CD8-positive, alpha-beta T cell (primary cell): ENCODE measurements at regions of chr19 and their contacts with region 1.

Region 1: GRCh38 chr19:2840794-2841790 is at the start of gene ZNF555:
- DNase-seq: peak; percentile 97 to 100 (median 98)
- ATAC-seq: peak; percentile 92
- H3K4me3 ChIP-seq: peak within 1 kb of the TSS; percentile 68 to 82
- H3K4me3 Mint-ChIP-seq: peak within 1 kb of the TSS; percentile 95
- H3K27ac ChIP-seq: peak within 1 kb of the TSS; percentile 67 to 85
- H3K27ac Mint-ChIP-seq: peak within 1 kb of the TSS; percentile 90
- H3K4me1 ChIP-seq: peaks cover 13% of the 10 kb centered on the region
- H3K4me1 Mint-ChIP-seq: peaks cover 23% of the 10 kb centered on the region
- H3K27me3 ChIP-seq: no peaks in the 10 kb centered on the region
- H3K27me3 Mint-ChIP-seq: no peaks in the 10 kb centered on the region
- CTCF ChIP-seq: peak; percentile 39
- total RNA-seq, gene ZNF555: 2.6 to 2.8 TPM

Region 2: DNA sequence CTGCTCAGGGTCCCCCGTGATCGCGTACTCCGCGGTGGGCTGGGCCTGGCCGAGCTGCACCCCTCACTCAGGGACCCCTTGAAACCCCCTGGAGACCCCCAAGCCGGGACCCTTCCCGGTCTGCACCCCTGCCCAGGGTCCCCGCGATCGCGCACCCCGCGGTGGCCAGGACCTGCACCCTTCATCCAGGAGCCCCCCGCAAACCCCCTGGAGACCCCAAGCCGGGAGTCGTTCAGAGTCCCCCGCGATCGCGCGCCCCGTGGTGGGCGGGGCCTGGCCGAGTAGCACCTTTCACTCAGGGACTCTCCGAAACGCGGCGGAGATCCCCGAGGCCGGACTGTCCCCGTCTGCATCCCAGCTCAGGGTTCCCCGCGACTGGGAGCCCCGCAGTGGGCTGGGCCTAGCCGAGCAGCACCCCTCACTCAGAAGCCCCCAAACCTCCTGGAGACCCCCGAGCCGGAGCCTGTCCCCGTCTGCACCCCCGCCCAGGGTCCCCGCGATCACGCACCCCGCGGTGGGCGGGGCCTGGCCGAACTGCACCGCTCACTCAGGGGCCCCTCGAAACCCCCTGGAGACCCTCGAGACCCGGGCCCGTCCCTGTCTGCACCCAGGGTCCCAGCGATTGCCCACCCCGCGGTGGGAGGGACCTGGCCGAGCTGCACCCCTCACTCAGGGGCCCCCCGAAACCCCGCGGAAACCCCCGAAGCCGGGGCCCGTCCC is 385.1 kb before region 1 on chr19:
- CTCF ChIA-PET with region 1: no interaction called
- POLR2A ChIA-PET with region 1: no interaction called
- intact Hi-C with region 1: loop called in 1 of 2 experiments (anchors 1 kb)
- DNase-seq: peak in 7 of 9 experiments; percentile 22 to 87 (median 52)
- ATAC-seq: peak; percentile 41
- H3K4me3 ChIP-seq: peak overlapping the region; percentile 62 to 80
- H3K4me3 Mint-ChIP-seq: peak overlapping the region; percentile 83
- H3K27ac ChIP-seq: peak overlapping the region; percentile 32 to 50
- H3K27ac Mint-ChIP-seq: peak overlapping the region; percentile 75
- H3K4me1 ChIP-seq: peaks cover 14% of the 10 kb centered on the region
- H3K4me1 Mint-ChIP-seq: peaks cover 13% of the 10 kb centered on the region
- H3K27me3 ChIP-seq: no peaks in the 10 kb centered on the region
- H3K27me3 Mint-ChIP-seq: no peaks in the 10 kb centered on the region
- CTCF ChIP-seq: no peak

Region 3: GRCh38 chr19:2820112-2820702 is 20.9 kb before region 1 on chr19:
- CTCF ChIA-PET with region 1: interaction called, 8 read pairs
- POLR2A ChIA-PET with region 1: interaction called, 8 read pairs
- intact Hi-C with region 1: loop called (anchors 1 kb)
- DNase-seq: peak in 1 of 9 experiments; percentile 16
- ATAC-seq: peak; percentile 9
- H3K4me3 ChIP-seq: peak overlapping the region; percentile 50 to 72
- H3K4me3 Mint-ChIP-seq: peak overlapping the region; percentile 86
- H3K27ac ChIP-seq: peak overlapping the region in 1 of 2 experiments; percentile 33
- H3K27ac Mint-ChIP-seq: peak overlapping the region; percentile 22
- H3K4me1 ChIP-seq: peaks cover 8% of the 10 kb centered on the region
- H3K4me1 Mint-ChIP-seq: peaks cover 10% of the 10 kb centered on the region
- H3K27me3 ChIP-seq: no peaks in the 10 kb centered on the region
- H3K27me3 Mint-ChIP-seq: no peaks in the 10 kb centered on the region
- CTCF ChIP-seq: no peak

Region 4: DNA sequence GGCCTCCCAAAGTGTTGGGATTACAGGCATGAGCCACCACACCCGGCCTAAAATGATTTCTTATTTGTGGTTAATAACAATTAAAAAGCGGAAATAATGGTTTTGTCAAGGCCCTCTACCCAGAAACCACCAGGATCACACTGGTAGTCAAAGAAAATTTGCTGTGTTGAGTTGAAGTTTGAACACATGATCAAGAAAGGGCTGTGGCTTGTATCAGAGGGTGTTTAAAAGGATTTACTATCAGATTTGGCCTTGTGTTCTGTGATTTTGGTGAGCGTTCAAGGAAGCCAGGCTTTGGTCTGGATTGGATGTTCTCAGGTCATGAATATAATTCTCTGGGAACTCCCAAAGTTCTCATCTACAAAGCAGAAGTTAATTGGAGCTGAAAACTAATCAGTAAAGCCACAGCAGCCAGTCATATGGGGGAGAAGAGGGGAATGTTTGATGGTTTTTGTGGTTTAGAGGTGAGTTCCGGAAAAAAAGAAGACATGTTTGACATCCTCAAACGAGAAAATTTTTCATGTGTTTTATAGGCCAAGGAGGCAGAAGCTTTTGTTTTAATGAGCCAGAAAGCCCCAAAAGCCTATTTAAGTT is 15.5 kb after region 1 on chr19:
- CTCF ChIA-PET with region 1: interaction called, 8 read pairs
- POLR2A ChIA-PET with region 1: interaction called, 4 read pairs
- intact Hi-C with region 1: loop called (anchors 1 kb)
- DNase-seq: peak in 2 of 9 experiments; percentile 64 to 78
- ATAC-seq: peak; percentile 80
- H3K4me3 ChIP-seq: no peak overlapping the region
- H3K4me3 Mint-ChIP-seq: peak overlapping the region; percentile 42
- H3K27ac ChIP-seq: peak overlapping the region in 1 of 2 experiments; percentile 17
- H3K27ac Mint-ChIP-seq: peak overlapping the region; percentile 78
- H3K4me1 ChIP-seq: peaks cover 34% of the 10 kb centered on the region
- H3K4me1 Mint-ChIP-seq: peaks cover 27% of the 10 kb centered on the region
- H3K27me3 ChIP-seq: no peaks in the 10 kb centered on the region
- H3K27me3 Mint-ChIP-seq: no peaks in the 10 kb centered on the region
- CTCF ChIP-seq: no peak

Region 5: DNA sequence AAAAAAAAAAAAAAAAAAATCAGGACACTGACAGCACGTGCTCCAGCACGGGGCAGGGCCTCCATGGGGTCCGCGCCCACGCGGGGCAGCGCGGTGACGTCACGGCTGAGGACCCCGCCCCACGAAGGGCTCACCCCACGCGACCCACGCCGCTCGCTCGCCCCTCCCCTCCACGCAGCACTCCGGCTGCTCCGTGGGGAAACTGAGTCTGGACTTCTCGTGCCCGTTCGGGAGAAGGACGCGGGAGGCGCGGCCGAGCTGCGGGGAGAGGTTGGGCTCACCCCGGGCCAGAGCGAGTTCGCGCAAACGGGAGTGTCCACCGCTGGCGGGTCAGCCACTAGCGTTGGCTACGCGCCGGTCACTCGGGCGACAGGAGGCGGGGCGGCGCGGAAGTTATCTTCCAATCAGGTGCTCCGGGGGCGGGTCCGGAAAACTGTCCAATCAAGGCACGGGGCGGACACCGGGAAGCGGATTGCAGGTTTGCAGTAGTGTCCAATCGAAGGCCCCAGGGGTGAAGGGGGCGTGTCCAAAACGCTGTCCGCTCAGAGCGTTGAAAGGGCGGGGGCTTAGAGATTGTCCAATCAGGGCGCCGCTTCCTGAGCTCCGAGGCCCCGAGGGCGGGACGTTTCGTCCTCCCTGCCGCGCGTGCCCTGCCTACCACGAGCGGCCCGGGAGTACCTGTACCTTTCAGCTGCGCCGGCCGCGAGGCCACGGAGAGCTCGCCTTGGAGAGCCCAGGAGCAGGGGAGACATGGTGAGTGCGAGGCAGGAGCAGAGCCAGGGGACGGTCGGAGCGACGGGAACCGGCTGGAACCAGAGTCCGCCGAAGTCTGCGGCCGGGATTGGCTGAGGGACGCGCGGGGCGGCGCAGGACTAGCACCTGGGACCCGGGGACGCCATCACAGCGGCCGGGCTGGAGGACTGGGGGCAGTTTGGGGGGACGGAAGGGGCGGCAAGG is 59.5 kb after region 1 on chr19 and contains the start of gene ZNF57:
- CTCF ChIA-PET with region 1: no interaction called
- POLR2A ChIA-PET with region 1: no interaction called
- intact Hi-C with region 1: loop called (anchors 1 kb)
- DNase-seq: peak; percentile 92 to 99 (median 98)
- ATAC-seq: peak; percentile 96
- H3K4me3 ChIP-seq: peak within 1 kb of the TSS; percentile 85 to 90
- H3K4me3 Mint-ChIP-seq: peak within 1 kb of the TSS; percentile 97
- H3K27ac ChIP-seq: peak within 1 kb of the TSS; percentile 37 to 50
- H3K27ac Mint-ChIP-seq: peak within 1 kb of the TSS; percentile 86
- H3K4me1 ChIP-seq: peaks cover 10% of the 10 kb centered on the region
- H3K4me1 Mint-ChIP-seq: peaks cover 27% of the 10 kb centered on the region
- H3K27me3 ChIP-seq: no peaks in the 10 kb centered on the region
- H3K27me3 Mint-ChIP-seq: no peaks in the 10 kb centered on the region
- CTCF ChIP-seq: no peak
- total RNA-seq, gene ZNF57: 0.72 to 1.5 TPM

Region 6: DNA sequence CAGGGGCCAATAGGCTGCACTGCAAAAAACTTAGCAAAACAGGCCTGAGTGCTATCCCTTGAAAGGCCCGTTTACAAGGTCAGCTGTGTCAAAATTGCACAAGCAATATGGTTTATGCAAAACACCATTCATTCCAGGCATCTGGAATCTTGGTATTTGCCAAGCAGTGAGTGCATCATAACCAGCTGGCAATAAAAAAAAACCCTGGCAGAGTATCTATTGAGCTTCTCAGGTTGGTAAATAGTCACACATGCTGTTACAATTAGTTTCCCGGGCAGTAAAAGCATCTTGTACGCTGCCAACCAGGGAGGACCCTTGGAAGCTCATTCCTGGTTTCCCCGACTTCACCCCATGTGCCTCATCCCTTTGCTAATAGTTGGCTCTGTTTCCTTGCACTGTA is 82.4 kb after region 1 on chr19:
- CTCF ChIA-PET with region 1: no interaction called
- POLR2A ChIA-PET with region 1: no interaction called
- intact Hi-C with region 1: no loop called
- DNase-seq: no peak
- ATAC-seq: no peak
- H3K4me3 ChIP-seq: no peak overlapping the region
- H3K4me3 Mint-ChIP-seq: no peak overlapping the region
- H3K27ac ChIP-seq: no peak overlapping the region
- H3K27ac Mint-ChIP-seq: no peak overlapping the region
- H3K4me1 ChIP-seq: no peaks in the 10 kb centered on the region
- H3K4me1 Mint-ChIP-seq: no peaks in the 10 kb centered on the region
- H3K27me3 ChIP-seq: no peaks in the 10 kb centered on the region
- H3K27me3 Mint-ChIP-seq: no peaks in the 10 kb centered on the region
- CTCF ChIP-seq: no peak

Region 7: GRCh38 chr19:2944775-2945574 is 103.9 kb after region 1 on chr19 and contains the start of gene ZNF77:
- CTCF ChIA-PET with region 1: no interaction called
- POLR2A ChIA-PET with region 1: no interaction called
- intact Hi-C with region 1: loop called in 1 of 2 experiments (anchors 5 kb)
- DNase-seq: peak; percentile 97 to 100 (median 99)
- ATAC-seq: peak; percentile 97
- H3K4me3 ChIP-seq: peak within 1 kb of the TSS; percentile 80 to 84
- H3K4me3 Mint-ChIP-seq: peak within 1 kb of the TSS; percentile 96
- H3K27ac ChIP-seq: peak within 1 kb of the TSS; percentile 82 to 90
- H3K27ac Mint-ChIP-seq: peak within 1 kb of the TSS; percentile 97
- H3K4me1 ChIP-seq: peaks cover 21% of the 10 kb centered on the region
- H3K4me1 Mint-ChIP-seq: peaks cover 33% of the 10 kb centered on the region
- H3K27me3 ChIP-seq: no peaks in the 10 kb centered on the region
- H3K27me3 Mint-ChIP-seq: no peaks in the 10 kb centered on the region
- CTCF ChIP-seq: no peak
- total RNA-seq, gene ZNF77: 1.4 to 2.0 TPM

Region 8: DNA sequence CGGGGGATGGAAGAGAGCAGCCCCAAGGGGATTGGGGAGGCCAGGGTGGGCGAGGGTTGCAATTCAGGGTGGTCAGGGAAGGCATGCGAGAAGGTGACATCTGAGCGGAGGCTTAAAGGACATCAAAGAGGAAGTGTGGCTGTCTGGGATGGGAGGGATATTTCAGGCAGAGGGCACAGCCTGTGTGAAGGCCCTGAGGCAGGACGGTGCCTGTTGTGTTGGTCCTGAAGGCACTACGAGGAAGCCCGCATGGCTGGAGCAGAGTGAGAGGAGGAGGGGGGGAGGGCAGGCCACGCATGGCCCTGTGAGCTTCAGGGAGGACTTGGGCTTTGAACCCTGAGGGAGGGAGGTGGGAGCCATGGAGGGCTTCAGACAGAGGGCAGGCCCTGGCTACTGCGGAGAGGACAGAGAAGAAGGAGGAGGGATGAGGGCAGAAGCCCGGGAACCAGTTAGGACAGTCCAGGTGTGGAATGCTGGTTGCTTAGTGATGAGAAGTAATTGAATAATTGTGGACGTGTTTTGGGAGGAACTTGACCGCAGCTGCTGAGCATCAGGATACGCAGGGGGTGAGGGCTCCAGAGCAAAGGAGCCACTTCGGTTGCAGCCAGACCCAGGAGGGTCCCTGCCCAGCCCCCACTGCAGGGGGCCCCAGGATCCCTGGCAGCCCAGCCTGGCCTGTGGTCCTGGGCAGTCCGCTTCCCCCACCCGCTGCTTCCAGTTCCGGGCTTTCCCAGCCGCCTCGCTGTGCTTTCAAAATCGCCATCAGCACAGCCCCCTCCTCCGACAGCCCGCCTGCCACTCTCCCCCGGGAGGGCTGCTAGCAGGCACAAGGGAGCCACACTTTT is 142.5 kb after region 1 on chr19:
- CTCF ChIA-PET with region 1: no interaction called
- POLR2A ChIA-PET with region 1: no interaction called
- intact Hi-C with region 1: no loop called
- DNase-seq: no peak
- ATAC-seq: no peak
- H3K4me3 ChIP-seq: no peak overlapping the region
- H3K4me3 Mint-ChIP-seq: no peak overlapping the region
- H3K27ac ChIP-seq: no peak overlapping the region
- H3K27ac Mint-ChIP-seq: no peak overlapping the region
- H3K4me1 ChIP-seq: no peaks in the 10 kb centered on the region
- H3K4me1 Mint-ChIP-seq: no peaks in the 10 kb centered on the region
- H3K27me3 ChIP-seq: no peaks in the 10 kb centered on the region
- H3K27me3 Mint-ChIP-seq: peaks cover 12% of the 10 kb centered on the region
- CTCF ChIP-seq: no peak